ENCODE measurements at regions of chr7 and their contacts with region 1.

Region 1: DNA sequence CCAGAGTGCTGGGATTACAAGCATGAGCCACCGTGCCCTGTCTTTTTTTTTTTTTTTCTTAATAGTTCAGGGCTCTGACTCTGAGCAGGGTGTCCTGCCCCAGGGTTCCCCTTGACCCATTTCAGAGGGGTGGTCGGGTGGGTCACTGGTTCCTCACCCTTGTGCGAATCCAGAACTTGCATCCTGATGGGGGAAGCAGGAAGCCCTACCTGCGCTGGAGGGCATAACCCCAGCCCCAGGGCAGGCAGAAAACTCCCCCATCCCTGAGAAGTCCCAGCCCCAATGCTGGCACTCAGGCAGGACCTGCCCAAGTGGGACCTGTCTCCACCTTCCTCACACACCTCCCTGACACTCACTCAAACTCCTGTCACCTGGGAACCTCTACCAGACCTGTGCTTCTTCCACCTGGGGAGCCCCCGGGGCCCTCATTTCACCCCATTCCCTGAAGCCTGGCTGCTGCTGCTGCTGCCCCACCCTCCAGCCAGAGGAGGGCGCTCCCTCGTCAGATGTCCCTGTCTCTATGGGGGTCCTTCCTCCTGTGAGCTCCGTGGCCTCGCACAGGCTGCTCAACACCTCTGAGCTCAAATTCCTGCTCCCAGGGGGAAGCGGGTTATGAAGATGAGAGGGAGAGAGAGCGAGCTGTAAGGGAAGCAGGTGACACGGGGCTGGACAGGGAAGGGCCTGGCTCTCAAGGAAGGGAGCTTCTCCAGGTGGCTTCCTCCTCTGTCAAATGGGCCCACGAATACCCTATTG is 15.1 kb upstream of the ZNF273 start:
- DNase-seq: peak in 4 of 5 donors; percentile 15 to 41 (median 30)
- H3K4me3 ChIP-seq: peak overlapping the region; percentile 16 to 65
- H3K4me3 Mint-ChIP-seq: peak overlapping the region; percentile 82 to 97 (median 90)
- H3K27ac ChIP-seq: no peak overlapping the region
- H3K27ac Mint-ChIP-seq: peak overlapping the region in 5 of 7 donors; percentile 9 to 78 (median 66)
- H3K4me1 ChIP-seq: peaks cover 18% of the 10 kb centered on the region
- H3K4me1 Mint-ChIP-seq: peaks cover 5 to 26% (median 13%) of the 10 kb centered on the region in 4 donors
- H3K27me3 ChIP-seq: peaks cover 5% of the 10 kb centered on the region
- H3K27me3 Mint-ChIP-seq: peaks cover 36 to 48% of the 10 kb centered on the region in 2 donors

Region 2: GRCh38 chr7:64902806-64903721 is 15.1 kb after region 1 on chr7 and contains the start of gene ZNF273:
- CTCF ChIA-PET with region 1: interaction called, 5 read pairs
- POLR2A ChIA-PET with region 1: interaction called, 12 read pairs
- intact Hi-C with region 1: loop called (anchors 2 kb)
- DNase-seq: peak; percentile 89 to 95 (median 90)
- H3K4me3 ChIP-seq: peak within 1 kb of the TSS; percentile 67 to 71
- H3K4me3 Mint-ChIP-seq: peak within 1 kb of the TSS; percentile 96 to 98 (median 98)
- H3K27ac ChIP-seq: peak within 1 kb of the TSS; percentile 79
- H3K27ac Mint-ChIP-seq: peak within 1 kb of the TSS; percentile 92 to 97 (median 96)
- H3K4me1 ChIP-seq: peaks cover 43% of the 10 kb centered on the region
- H3K4me1 Mint-ChIP-seq: peaks cover 32 to 53% (median 39%) of the 10 kb centered on the region in 4 donors
- H3K27me3 ChIP-seq: no peaks in the 10 kb centered on the region
- H3K27me3 Mint-ChIP-seq: no peaks in the 10 kb centered on the region
- total RNA-seq, gene ZNF273: 8.3 to 8.9 TPM

Region 3: DNA sequence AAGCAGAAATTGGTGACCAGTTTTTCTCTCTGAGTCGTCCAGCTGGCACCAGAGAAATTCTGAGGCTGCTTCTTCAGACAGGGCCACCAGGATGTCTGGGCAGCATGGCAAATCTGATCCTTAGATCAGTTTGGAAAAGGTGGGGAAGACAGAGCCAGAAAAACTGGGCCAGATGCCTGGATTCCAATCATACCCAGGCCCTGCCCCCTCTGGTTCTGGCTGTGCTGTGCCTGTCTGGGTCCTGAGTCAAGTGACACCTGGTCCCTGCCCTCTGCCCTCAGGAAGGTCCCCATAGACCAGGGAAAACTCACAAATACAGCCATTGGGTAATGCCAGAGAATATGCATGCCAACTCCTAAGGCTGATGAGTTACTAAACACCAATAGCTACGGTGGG is 57.4 kb after region 1 on chr7:
- CTCF ChIA-PET with region 1: no interaction called
- POLR2A ChIA-PET with region 1: no interaction called
- intact Hi-C with region 1: no loop called
- DNase-seq: no peak
- H3K4me3 ChIP-seq: no peak overlapping the region
- H3K4me3 Mint-ChIP-seq: no peak overlapping the region
- H3K27ac ChIP-seq: no peak overlapping the region
- H3K27ac Mint-ChIP-seq: no peak overlapping the region
- H3K4me1 ChIP-seq: no peaks in the 10 kb centered on the region
- H3K4me1 Mint-ChIP-seq: peaks cover 0 to 6% (median 1%) of the 10 kb centered on the region in 4 donors
- H3K27me3 ChIP-seq: peaks cover 4% of the 10 kb centered on the region
- H3K27me3 Mint-ChIP-seq: peaks cover 23 to 40% of the 10 kb centered on the region in 2 donors

Measured in CD4-positive, alpha-beta memory T cell (primary cell).